Esophagus muscularis mucosa (tissue), 4 donors: ENCODE measurements at regions of chr1 and their contacts with region 1.

Region 1: DNA sequence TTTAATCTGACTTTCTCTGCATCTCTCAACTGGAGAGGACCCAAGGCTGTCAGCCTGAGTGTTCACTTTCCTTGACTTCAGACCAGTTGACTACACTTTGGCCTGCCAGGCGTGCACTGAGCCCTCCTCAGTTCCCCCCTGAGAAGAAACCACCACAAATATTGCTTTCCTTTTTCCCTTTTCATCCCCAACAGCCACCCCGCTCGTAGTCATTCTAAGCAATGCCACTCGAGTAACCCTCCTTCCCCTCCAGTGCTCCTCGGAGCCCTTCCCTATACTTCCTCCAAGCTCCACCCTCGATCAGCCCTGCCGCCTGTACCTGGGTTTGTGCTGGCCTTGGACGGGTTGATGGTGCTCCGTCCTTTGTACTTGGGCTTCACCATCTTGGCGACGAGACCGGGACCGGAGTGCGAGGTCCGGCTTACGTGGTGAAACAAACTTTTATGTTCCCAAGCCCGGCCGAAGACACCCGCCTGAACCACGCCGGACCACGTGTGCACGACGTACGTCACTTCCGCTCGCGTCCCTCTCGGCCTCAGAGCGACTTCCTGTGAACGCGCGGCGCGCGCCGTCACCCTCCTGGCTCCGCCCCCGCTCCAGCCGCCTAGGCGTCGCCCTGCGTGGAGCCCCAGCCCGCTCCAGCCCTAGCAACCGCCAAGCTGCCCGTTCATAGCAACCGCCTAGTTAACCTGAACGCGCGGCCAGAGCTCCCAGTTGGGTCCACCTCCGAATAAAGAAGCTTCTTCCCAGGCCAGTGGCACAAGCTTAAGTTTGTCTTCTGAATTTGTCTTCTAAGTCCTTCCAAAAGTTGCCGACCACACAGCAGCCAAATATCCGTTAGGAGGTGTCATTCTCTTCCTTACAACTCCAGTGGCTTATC is at the start of gene GNL2:
- DNase-seq: peak; percentile 99
- H3K4me3 ChIP-seq: peak within 1 kb of the TSS; percentile 74 to 86 (median 82)
- H3K27ac ChIP-seq: peak within 1 kb of the TSS; percentile 80 to 88 (median 84)
- H3K4me1 ChIP-seq: peaks cover 16 to 30% (median 24%) of the 10 kb centered on the region in 4 donors
- H3K27me3 ChIP-seq: no peaks in the 10 kb centered on the region
- CTCF ChIP-seq: peak in 1 of 3 experiments; percentile 28
- EP300 ChIP-seq: no peak
- POLR2A ChIP-seq: peak; percentile 77
- total RNA-seq, gene GNL2: 25.1 to 36.4 (median 27.0) TPM

Region 2: GRCh38 chr1:37514350-37515184 is 81.1 kb before region 1 on chr1 and contains the start of gene MEAF6:
- intact Hi-C with region 1: loop called (anchors 10 kb)
- DNase-seq: peak; percentile 93
- H3K4me3 ChIP-seq: peak within 1 kb of the TSS; percentile 93 to 98 (median 96)
- H3K27ac ChIP-seq: peak within 1 kb of the TSS; percentile 92 to 95 (median 94)
- H3K4me1 ChIP-seq: peaks cover 10 to 34% (median 28%) of the 10 kb centered on the region in 4 donors
- H3K27me3 ChIP-seq: no peaks in the 10 kb centered on the region
- CTCF ChIP-seq: peak; percentile 81 to 89 (median 84)
- EP300 ChIP-seq: no peak
- POLR2A ChIP-seq: peak; percentile 36
- total RNA-seq, gene MEAF6: 55.2 to 100 (median 78.3) TPM

Region 3: GRCh38 chr1:37807555-37808368 is 212.1 kb after region 1 on chr1 and contains the starts of genes C1orf122 and YRDC:
- intact Hi-C with region 1: loop called (anchors 10 kb)
- DNase-seq: peak; percentile 98
- H3K4me3 ChIP-seq: peak within 1 kb of the TSS; percentile 75 to 96 (median 83)
- H3K27ac ChIP-seq: peak within 1 kb of the TSS; percentile 93 to 98 (median 96)
- H3K4me1 ChIP-seq: peaks cover 19 to 58% (median 46%) of the 10 kb centered on the region in 4 donors
- H3K27me3 ChIP-seq: no peaks in the 10 kb centered on the region
- CTCF ChIP-seq: no peak
- EP300 ChIP-seq: no peak
- POLR2A ChIP-seq: peak; percentile 84
- total RNA-seq, gene C1orf122: 69.9 to 103 (median 94.3) TPM
- total RNA-seq, gene YRDC: 10.8 to 19.1 (median 14.3) TPM